A673 (cell line): ENCODE measurements at regions of chr6 and their contacts with region 1.

Region 1: DNA sequence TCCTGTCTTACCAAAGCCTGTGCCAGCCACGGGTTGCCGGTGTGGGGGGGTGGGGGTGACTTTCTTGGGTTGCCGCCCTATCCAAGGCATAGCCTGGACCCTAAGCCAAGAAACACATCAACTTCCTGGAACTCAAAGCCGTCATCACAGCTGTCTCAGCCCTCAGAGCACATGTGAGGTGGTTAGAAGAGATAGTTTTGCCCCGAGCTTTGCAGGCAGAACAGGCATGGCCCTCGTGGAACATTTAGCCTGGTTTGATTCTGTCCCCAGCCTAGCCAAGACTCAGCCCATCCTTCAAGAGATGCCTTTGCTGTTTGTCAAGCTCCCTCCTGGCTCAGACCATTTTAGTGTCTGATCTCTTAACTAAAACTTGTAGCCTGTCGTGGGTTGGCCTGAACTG is 64.9 kb downstream of the RREB1 start:
- DNase-seq: no peak
- H3K4me3 ChIP-seq: no peak overlapping the region
- H3K27ac ChIP-seq: no peak overlapping the region
- H3K4me1 ChIP-seq: peaks cover 40% of the 10 kb centered on the region
- H3K27me3 ChIP-seq: no peaks in the 10 kb centered on the region
- CTCF ChIP-seq: no peak

Region 2: GRCh38 chr6:6912817-6913744 is 259.6 kb before region 1 on chr6:
- CTCF ChIA-PET with region 1: no interaction called
- POLR2A ChIA-PET with region 1: interaction called, 12 read pairs
- intact Hi-C with region 1: no loop called
- DNase-seq: no peak
- H3K4me3 ChIP-seq: no peak overlapping the region
- H3K27ac ChIP-seq: no peak overlapping the region
- H3K4me1 ChIP-seq: peaks cover 11% of the 10 kb centered on the region
- H3K27me3 ChIP-seq: no peaks in the 10 kb centered on the region
- CTCF ChIP-seq: no peak